HepG2 (cell line): ENCODE measurements at regions of chr14 and their contacts with region 1.

Region 1: DNA sequence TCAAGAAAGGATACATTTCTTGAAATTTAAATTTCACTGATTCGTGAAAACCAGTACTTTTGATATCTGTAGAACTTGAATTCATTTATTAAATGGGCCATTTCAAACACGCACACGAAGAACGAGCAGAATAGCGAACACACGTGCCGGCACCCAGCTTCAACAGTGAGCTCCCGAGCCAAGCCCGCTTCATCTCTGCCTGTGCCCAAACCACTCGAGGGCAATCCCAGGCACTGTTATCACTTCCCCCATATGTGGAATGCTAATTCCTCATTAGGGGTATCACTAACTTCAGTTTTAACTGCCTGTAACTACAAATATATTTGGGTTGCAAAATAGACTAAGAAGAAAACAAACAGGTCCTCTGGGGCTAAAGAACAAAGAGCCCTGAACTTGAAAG is 48.0 kb downstream of the AMN start:
- DNase-seq: no peak
- ATAC-seq: no peak
- H3K4me3 ChIP-seq: no peak overlapping the region
- H3K27ac ChIP-seq: no peak overlapping the region
- H3K4me1 ChIP-seq: no peaks in the 10 kb centered on the region
- H3K27me3 ChIP-seq: no peaks in the 10 kb centered on the region
- CTCF ChIP-seq: no peak
- EP300 ChIP-seq: no peak
- POLR2A ChIP-seq: no peak
- RAD21 ChIP-seq: no peak

Region 2: GRCh38 chr14:102982852-102983470 is 12.5 kb after region 1 on chr14:
- CTCF ChIA-PET with region 1: no interaction called
- POLR2A ChIA-PET with region 1: no interaction called
- in situ Hi-C with region 1: no loop called
- intact Hi-C with region 1: loop called (anchors 1 kb)
- DNase-seq: no peak
- ATAC-seq: no peak
- H3K4me3 ChIP-seq: no peak overlapping the region
- H3K27ac ChIP-seq: no peak overlapping the region
- H3K4me1 ChIP-seq: no peaks in the 10 kb centered on the region
- H3K27me3 ChIP-seq: no peaks in the 10 kb centered on the region; a peak in 1 of 5 replicates
- CTCF ChIP-seq: peak; percentile 23; the same call in 1 of the 2 replicates
- EP300 ChIP-seq: no peak
- POLR2A ChIP-seq: no peak
- RAD21 ChIP-seq: no peak